ENCODE measurements at regions of chr3 and their contacts with region 1.

Region 1: GRCh38 chr3:31550452-31551251 is 17.9 kb downstream of the STT3B start:
- DNase-seq: no peak
- ATAC-seq: peak; percentile 71
- H3K4me3 ChIP-seq: no peak overlapping the region
- H3K27ac ChIP-seq: no peak overlapping the region
- H3K4me1 ChIP-seq: no peaks in the 10 kb centered on the region
- H3K27me3 ChIP-seq: no peaks in the 10 kb centered on the region
- CTCF ChIP-seq: peak; percentile 48 to 62 (median 49); a peak in 5 of 6 replicates
- EP300 ChIP-seq: no peak
- POLR2A ChIP-seq: no peak
- RAD21 ChIP-seq: peak; percentile 51

Region 2: GRCh38 chr3:31391150-31391549 is 159.5 kb before region 1 on chr3:
- CTCF ChIA-PET with region 1: no interaction called
- POLR2A ChIA-PET with region 1: no interaction called
- RAD21 ChIA-PET with region 1: no interaction called
- SMC1A ChIA-PET with region 1: no interaction called
- in situ Hi-C with region 1: no loop called
- intact Hi-C with region 1: no loop called
- DNase-seq: no peak
- ATAC-seq: peak; percentile 81
- H3K4me3 ChIP-seq: no peak overlapping the region
- H3K27ac ChIP-seq: peak overlapping the region; percentile 35; the same call in 1 of the 2 replicates
- H3K4me1 ChIP-seq: peaks cover 34% of the 10 kb centered on the region
- H3K27me3 ChIP-seq: no peaks in the 10 kb centered on the region
- CTCF ChIP-seq: no peak
- EP300 ChIP-seq: no peak
- POLR2A ChIP-seq: no peak
- RAD21 ChIP-seq: 0 out of 2 replicates have a peak, but pooled peaks have one; percentile 4

Region 3: GRCh38 chr3:31573036-31573779 is 22.6 kb after region 1 on chr3:
- CTCF ChIA-PET with region 1: interaction called, 13 read pairs
- POLR2A ChIA-PET with region 1: no interaction called
- RAD21 ChIA-PET with region 1: no interaction called
- SMC1A ChIA-PET with region 1: interaction called, 7 read pairs
- in situ Hi-C with region 1: no loop called
- intact Hi-C with region 1: no loop called
- DNase-seq: no peak
- ATAC-seq: peak; percentile 75
- H3K4me3 ChIP-seq: no peak overlapping the region
- H3K27ac ChIP-seq: no peak overlapping the region
- H3K4me1 ChIP-seq: peaks cover 17% of the 10 kb centered on the region
- H3K27me3 ChIP-seq: no peaks in the 10 kb centered on the region
- CTCF ChIP-seq: no peak
- EP300 ChIP-seq: no peak
- POLR2A ChIP-seq: no peak
- RAD21 ChIP-seq: no peak

Measured in GM12878 (cell line).